IMR-90 (cell line): ENCODE measurements at regions of chr13 and their contacts with region 1.

Region 1: DNA sequence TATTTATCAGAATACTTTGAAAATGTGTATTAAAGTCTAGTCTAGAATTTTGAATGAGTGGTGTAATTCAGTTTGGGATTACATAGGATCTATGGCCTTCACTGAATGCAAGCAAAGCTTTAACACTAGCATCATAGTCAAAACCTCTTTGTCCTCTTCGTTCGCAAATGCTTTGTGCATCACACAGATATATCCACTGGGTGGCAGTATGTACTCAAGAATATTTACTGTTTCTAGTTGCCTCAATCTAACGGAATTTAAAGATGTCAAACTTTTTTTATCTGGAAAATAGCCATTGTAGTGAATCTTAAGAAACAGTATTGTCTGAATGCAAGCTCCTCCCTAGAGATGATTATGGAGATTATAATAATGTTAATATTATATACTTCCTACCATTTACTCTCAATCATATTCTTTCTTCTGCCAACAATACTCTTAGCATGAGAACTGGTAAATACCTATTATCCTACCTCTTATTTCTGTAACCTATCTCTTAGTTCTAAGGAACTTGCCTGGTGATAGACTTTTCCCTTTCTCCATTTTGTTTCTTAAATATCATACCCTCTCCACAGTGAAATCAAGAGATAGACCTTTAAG is 25.8 kb downstream of the LACC1 start:
- DNase-seq: peak; percentile 77
- ATAC-seq: peak; percentile 82
- H3K4me3 ChIP-seq: no peak overlapping the region
- H3K27ac ChIP-seq: no peak overlapping the region
- H3K4me1 ChIP-seq: peaks cover 3% of the 10 kb centered on the region
- H3K27me3 ChIP-seq: no peaks in the 10 kb centered on the region; the same call in 1 of the 2 replicates
- CTCF ChIP-seq: peak; percentile 81
- POLR2A ChIP-seq: no peak
- RAD21 ChIP-seq: peak; percentile 88

Region 2: GRCh38 chr13:43797869-43798268 is 107.7 kb before region 1 on chr13:
- CTCF ChIA-PET with region 1: no interaction called
- POLR2A ChIA-PET with region 1: no interaction called
- dilution Hi-C with region 1: no loop called
- in situ Hi-C with region 1: no loop called
- intact Hi-C with region 1: no loop called
- DNase-seq: peak; percentile 11
- ATAC-seq: no peak
- H3K4me3 ChIP-seq: no peak overlapping the region
- H3K27ac ChIP-seq: no peak overlapping the region
- H3K4me1 ChIP-seq: no peaks in the 10 kb centered on the region
- H3K27me3 ChIP-seq: peaks cover 2% of the 10 kb centered on the region; the same call in 1 of the 2 replicates
- CTCF ChIP-seq: peak; percentile 35; the same call in 1 of the 2 replicates
- POLR2A ChIP-seq: no peak
- RAD21 ChIP-seq: peak; percentile 31

Region 3: GRCh38 chr13:44050450-44051063 is 145.0 kb after region 1 on chr13:
- CTCF ChIA-PET with region 1: interaction called, 5 read pairs
- POLR2A ChIA-PET with region 1: no interaction called
- dilution Hi-C with region 1: no loop called
- in situ Hi-C with region 1: no loop called
- intact Hi-C with region 1: loop called (anchors 1 kb)
- DNase-seq: peak; percentile 52
- ATAC-seq: no peak; the same call in 1 of the 2 replicates
- H3K4me3 ChIP-seq: no peak overlapping the region
- H3K27ac ChIP-seq: no peak overlapping the region
- H3K4me1 ChIP-seq: peaks cover 13% of the 10 kb centered on the region
- H3K27me3 ChIP-seq: peaks cover 5% of the 10 kb centered on the region
- CTCF ChIP-seq: peak; percentile 75
- POLR2A ChIP-seq: no peak
- RAD21 ChIP-seq: peak; percentile 78

Region 4: GRCh38 chr13:44141725-44142539 is 236.4 kb after region 1 on chr13:
- CTCF ChIA-PET with region 1: no interaction called
- POLR2A ChIA-PET with region 1: no interaction called
- dilution Hi-C with region 1: no loop called
- in situ Hi-C with region 1: no loop called
- intact Hi-C with region 1: loop called (anchors 5 kb)
- DNase-seq: peak; percentile 90
- ATAC-seq: peak; percentile 100
- H3K4me3 ChIP-seq: peak overlapping the region; percentile 67
- H3K27ac ChIP-seq: peak overlapping the region; percentile 92
- H3K4me1 ChIP-seq: peaks cover 7% of the 10 kb centered on the region
- H3K27me3 ChIP-seq: peaks cover 2% of the 10 kb centered on the region; the same call in 1 of the 2 replicates
- CTCF ChIP-seq: 0 out of 2 replicates have a peak, but pooled peaks have one; percentile 3
- POLR2A ChIP-seq: peak; percentile 76
- RAD21 ChIP-seq: peak; percentile 15; the same call in 1 of the 2 replicates

Region 5: DNA sequence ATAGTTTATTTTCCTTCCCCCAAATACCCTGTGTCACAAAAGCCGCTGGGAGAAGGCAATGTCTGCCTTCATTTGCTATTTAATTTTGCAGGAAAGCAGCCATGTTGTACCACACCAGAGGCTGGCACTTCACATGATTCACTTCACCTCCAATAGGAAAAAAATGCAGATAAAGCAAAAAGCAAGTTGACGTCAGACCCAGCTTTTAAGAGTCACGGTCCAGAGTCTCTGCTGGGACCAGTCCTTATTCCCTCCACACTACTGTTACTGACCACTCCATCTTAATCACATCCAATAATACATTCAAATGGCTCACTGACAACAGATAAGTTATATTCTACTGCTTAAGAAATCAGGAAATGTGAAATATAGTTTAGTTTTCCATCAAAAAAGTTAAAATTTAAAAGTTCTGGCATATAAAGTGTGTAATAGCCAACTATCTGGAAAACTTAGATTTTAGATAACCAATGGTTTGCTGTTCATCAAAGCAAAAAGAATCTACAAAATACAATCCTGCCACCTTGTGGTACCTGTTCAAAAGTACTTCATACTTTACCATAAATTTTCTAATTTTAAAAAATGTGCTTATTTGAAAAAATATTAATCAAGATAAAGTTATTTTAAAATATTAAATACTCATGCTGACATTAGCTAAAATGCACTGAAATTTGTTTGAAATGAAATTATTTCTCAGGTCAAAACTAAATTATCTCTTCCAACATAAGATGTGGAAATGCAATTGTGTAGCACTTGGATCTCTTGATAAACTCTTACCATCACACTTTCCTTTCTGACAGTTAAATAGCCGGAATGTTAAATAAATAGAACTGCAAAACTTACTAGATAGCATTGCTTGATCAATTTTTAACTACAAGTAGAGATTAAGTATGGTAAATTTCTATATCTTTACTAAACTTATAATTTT is 565.4 kb after region 1 on chr13:
- CTCF ChIA-PET with region 1: interaction called, 4 read pairs
- POLR2A ChIA-PET with region 1: no interaction called
- dilution Hi-C with region 1: loop called (anchors 25 kb)
- in situ Hi-C with region 1: no loop called
- intact Hi-C with region 1: loop called (anchors 1 kb)
- DNase-seq: peak; percentile 40
- ATAC-seq: no peak
- H3K4me3 ChIP-seq: no peak overlapping the region
- H3K27ac ChIP-seq: no peak overlapping the region
- H3K4me1 ChIP-seq: peaks cover 9% of the 10 kb centered on the region
- H3K27me3 ChIP-seq: no peaks in the 10 kb centered on the region
- CTCF ChIP-seq: peak; percentile 56
- POLR2A ChIP-seq: no peak
- RAD21 ChIP-seq: peak; percentile 57

Region 6: DNA sequence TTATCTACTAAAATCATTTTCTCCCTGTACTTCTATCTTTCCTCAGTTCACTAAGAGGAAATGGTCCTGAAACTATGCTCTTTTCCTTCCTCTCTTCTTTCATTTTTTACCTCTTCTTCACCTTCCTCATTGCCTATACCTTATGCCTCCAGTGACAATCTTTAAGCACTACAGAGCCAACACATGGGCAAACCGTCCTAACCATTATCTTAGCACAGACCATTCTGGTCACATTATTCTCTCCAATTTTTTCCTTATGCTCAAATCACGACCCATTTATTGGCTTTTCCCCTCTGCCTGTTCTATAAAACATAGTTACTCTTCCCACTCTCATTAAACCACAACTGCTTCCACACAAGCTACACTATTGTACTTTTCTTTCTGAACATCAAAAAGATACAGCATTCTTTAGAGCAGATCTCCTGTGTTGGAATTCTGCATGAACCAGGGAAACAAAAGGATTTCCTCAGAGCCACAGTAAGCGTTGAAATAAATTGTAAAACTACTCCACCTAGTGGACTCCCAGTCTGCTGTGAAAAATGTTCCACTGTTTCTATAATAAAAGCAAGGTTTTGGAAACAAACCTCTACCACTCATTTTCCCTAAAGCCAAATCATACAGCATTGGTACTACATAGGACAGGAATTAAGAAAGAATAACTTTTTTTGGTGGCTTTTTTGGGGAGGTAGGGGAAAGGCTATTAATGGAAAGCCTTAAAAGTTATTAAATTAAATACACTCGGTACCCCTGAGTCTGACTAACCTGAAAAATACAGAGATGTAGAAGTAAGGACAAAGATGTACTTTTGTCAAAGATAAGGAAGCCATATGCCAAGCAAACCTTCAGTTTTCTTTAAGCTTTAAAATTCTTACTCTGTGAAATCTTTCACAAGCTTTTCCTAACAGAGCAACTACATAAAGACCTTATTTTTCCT is 1064.3 kb after region 1 on chr13:
- CTCF ChIA-PET with region 1: no interaction called
- POLR2A ChIA-PET with region 1: no interaction called
- dilution Hi-C with region 1: no loop called
- in situ Hi-C with region 1: no loop called
- intact Hi-C with region 1: loop called (anchors 2 kb)
- DNase-seq: peak; percentile 71
- ATAC-seq: peak; percentile 55
- H3K4me3 ChIP-seq: no peak overlapping the region
- H3K27ac ChIP-seq: no peak overlapping the region
- H3K4me1 ChIP-seq: peaks cover 9% of the 10 kb centered on the region
- H3K27me3 ChIP-seq: no peaks in the 10 kb centered on the region
- CTCF ChIP-seq: peak; percentile 87
- POLR2A ChIP-seq: no peak
- RAD21 ChIP-seq: peak; percentile 89

Region 7: DNA sequence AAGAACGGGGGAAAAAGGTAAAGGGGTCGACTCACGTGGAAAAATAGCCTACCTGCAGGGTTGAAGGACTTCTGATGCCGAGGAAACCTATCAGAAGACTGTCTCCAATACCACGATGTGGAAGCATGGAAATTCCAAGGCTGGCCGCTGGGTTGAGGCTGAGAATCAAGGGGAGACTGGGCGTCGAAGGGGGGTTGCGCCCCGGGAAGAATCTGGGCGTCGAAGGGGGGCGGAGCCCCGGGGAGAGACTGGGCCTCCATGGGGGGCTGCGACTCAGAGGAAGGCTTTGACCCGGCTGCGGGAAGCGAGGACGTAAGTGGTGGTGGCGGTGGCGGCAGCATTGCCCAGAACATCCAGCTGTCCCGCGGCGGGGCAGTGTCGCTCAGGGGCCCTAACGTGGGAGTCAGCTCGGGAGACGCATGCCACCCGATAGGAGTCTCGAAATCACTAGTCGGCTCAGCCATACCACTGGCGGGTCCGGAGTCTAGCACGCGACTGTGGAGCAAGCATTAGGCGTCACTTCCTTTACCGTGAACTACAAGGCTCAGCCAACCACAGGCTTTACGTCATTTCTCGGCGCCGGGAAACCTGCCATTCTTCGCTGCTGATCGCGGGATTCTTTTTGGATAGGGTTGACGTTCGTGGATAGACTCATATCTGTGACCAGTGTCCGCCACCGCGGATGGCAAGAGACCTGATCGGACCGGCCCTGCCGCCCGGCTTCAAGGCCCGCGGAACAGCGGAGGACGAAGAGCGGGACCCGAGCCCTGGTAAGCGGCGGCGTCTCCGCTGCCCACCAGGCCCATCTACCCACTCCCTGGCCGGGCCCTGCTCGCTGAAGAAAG is 1083.7 kb after region 1 on chr13 and contains the starts of genes GPALPP1 and NUFIP1:
- CTCF ChIA-PET with region 1: no interaction called
- POLR2A ChIA-PET with region 1: no interaction called
- dilution Hi-C with region 1: no loop called
- in situ Hi-C with region 1: loop called (anchors 10 kb)
- intact Hi-C with region 1: no loop called
- DNase-seq: peak; percentile 95
- ATAC-seq: peak; percentile 90
- H3K4me3 ChIP-seq: peak within 1 kb of the TSS; percentile 96
- H3K27ac ChIP-seq: peak within 1 kb of the TSS; percentile 93
- H3K4me1 ChIP-seq: peaks cover 2% of the 10 kb centered on the region
- H3K27me3 ChIP-seq: no peaks in the 10 kb centered on the region
- CTCF ChIP-seq: no peak
- POLR2A ChIP-seq: peak; percentile 86
- RAD21 ChIP-seq: no peak; the same call in 1 of the 2 replicates
- total RNA-seq, gene GPALPP1: 10.6 and 25.3 TPM in 2 replicates
- total RNA-seq, gene NUFIP1: 1.4 and 2.5 TPM in 2 replicates

Region 8: GRCh38 chr13:45310341-45311125 is 1405.0 kb after region 1 on chr13:
- CTCF ChIA-PET with region 1: no interaction called
- POLR2A ChIA-PET with region 1: no interaction called
- dilution Hi-C with region 1: no loop called
- in situ Hi-C with region 1: loop called (anchors 25 kb)
- intact Hi-C with region 1: no loop called
- DNase-seq: no peak
- ATAC-seq: no peak
- H3K4me3 ChIP-seq: no peak overlapping the region
- H3K27ac ChIP-seq: no peak overlapping the region
- H3K4me1 ChIP-seq: no peaks in the 10 kb centered on the region; the same call in 1 of the 2 replicates
- H3K27me3 ChIP-seq: no peaks in the 10 kb centered on the region
- CTCF ChIP-seq: no peak
- POLR2A ChIP-seq: no peak
- RAD21 ChIP-seq: no peak